ENCODE measurements at regions of chr3 and their contacts with region 1.

Region 1: DNA sequence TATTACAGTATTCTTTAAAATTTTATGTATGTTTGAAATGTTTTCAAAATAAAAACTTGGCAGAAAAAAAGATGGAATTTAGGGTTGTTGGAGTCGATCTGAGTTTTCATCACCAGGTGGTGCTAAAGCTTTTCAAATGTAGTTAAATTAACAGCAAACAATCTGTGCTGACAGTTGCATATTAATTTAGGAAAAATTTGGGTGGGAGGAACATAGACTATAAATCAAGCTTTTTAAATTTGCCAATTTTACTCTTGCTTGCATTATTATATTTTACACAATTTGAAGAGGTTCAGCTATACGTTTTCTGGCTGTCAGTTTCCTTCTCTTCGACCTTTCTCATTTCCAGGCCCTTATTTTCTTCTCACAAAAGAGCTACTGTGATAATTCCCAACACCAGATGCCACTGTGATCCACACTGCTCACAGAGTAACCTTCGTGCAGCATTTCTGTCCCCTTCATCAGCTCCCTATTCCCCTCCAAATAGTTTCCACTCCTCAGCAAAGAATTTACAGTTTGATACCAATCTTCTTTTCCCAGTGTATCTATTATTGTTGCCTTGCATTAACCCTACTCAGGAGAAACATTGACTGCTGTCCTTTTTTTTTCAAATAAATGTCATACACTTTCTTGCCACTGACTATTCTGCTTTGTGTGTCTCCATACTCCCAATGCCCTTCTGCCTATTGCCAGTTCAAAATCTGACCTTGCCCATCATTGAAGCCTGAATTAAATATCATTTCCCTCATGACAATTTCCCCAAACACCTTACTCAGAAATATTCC is 53.4 kb upstream of the EIF5A2 start:
- DNase-seq: no peak
- ATAC-seq: no peak
- H3K4me3 ChIP-seq: no peak overlapping the region
- H3K27ac ChIP-seq: peak overlapping the region in 1 of 12 donors; percentile 30
- H3K4me1 ChIP-seq: peaks cover 0 to 11% (median 0%) of the 10 kb centered on the region in 12 donors
- H3K27me3 ChIP-seq: no peaks in the 10 kb centered on the region
- CTCF ChIP-seq: peak; percentile 33 to 74 (median 62)
- POLR2A ChIP-seq: no peak

Region 2: DNA sequence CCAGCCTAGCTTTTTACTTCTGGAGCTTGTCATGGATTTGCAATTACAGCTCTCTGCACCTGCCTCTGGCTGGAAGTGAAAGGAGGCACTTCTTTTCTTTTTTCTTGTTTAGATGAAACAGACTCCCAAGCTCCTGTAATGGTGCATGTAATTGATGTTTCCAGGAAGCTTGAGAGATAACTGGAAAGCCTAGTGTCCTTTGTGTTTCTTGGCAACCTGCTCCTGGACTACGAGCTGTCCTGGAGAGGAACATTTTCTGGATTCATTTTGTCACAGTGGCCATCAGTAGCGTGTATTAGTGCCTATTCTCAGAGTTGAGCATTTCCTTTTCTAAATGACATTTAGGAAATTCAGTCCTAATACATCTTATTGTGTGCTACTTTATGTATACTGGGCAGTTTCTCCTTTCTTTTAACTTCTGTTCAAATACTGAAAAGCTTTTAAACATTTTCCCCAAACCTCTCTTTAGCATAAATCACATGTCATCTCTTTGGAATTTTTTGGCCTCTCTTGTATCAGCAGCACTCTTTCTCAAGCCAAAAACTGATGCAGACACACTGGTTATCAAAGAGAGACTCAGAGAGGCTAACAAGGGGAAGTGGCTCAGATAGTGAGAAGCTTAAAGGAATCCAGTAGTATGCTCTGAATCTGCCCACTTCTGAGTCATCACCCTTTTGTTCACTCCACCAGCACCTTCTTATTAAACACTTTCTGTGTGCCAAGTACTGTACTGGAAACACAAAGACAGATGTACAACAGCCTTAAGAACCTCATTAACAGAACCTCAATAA is 127.4 kb after region 1 on chr3:
- intact Hi-C with region 1: no loop called
- DNase-seq: no peak
- ATAC-seq: peak; percentile 56 to 83 (median 74)
- H3K4me3 ChIP-seq: no peak overlapping the region
- H3K27ac ChIP-seq: peak overlapping the region in 7 of 12 donors; percentile 8 to 56 (median 41)
- H3K4me1 ChIP-seq: peaks cover 0 to 34% (median 19%) of the 10 kb centered on the region in 12 donors
- H3K27me3 ChIP-seq: no peaks in the 10 kb centered on the region
- CTCF ChIP-seq: no peak
- POLR2A ChIP-seq: no peak

Region 3: GRCh38 chr3:171142985-171143384 is 181.2 kb after region 1 on chr3:
- intact Hi-C with region 1: loop called in 1 of 10 experiments (anchors 10 kb)
- DNase-seq: no peak
- ATAC-seq: peak in 1 of 4 donors; percentile 22
- H3K4me3 ChIP-seq: no peak overlapping the region
- H3K27ac ChIP-seq: no peak overlapping the region
- H3K4me1 ChIP-seq: no peaks in the 10 kb centered on the region
- H3K27me3 ChIP-seq: no peaks in the 10 kb centered on the region
- CTCF ChIP-seq: no peak
- POLR2A ChIP-seq: no peak

Region 4: GRCh38 chr3:171172070-171172469 is 210.3 kb after region 1 on chr3:
- intact Hi-C with region 1: loop called in 1 of 10 experiments (anchors 10 kb)
- DNase-seq: no peak
- ATAC-seq: no peak
- H3K4me3 ChIP-seq: no peak overlapping the region
- H3K27ac ChIP-seq: no peak overlapping the region
- H3K4me1 ChIP-seq: peaks cover 0 to 32% (median 15%) of the 10 kb centered on the region in 12 donors
- H3K27me3 ChIP-seq: no peaks in the 10 kb centered on the region
- CTCF ChIP-seq: peak in 6 of 12 donors; percentile 6 to 26 (median 16)
- POLR2A ChIP-seq: no peak

Region 5: DNA sequence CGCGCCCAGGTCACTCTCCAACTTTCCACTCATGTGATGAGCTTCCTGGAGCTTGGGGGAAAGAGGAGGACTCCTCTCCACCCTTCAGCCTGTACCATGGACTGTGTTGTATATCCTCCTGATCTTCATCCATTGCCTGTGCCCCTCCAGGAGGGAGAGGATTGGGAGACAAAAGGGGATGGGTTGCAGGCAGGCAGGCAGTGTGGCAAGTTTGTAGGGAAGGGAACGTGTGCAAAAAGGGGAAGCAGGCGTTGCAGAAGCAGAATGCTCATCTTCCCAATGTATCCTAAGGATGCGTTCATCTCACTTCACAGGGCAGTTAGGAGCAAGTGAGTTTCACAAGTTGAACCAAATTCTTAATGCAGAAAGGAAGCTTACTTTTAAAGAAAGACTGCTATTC is 1514.5 kb after region 1 on chr3:
- intact Hi-C with region 1: loop called in 1 of 10 experiments (anchors 10 kb)
- DNase-seq: no peak
- ATAC-seq: peak; percentile 17 to 51 (median 30)
- H3K4me3 ChIP-seq: peak overlapping the region in 8 of 12 donors; percentile 17 to 63 (median 52)
- H3K27ac ChIP-seq: peak overlapping the region in 3 of 12 donors; percentile 27 to 67 (median 59)
- H3K4me1 ChIP-seq: peaks cover 0 to 20% (median 0%) of the 10 kb centered on the region in 12 donors
- H3K27me3 ChIP-seq: no peaks in the 10 kb centered on the region
- CTCF ChIP-seq: no peak
- POLR2A ChIP-seq: no peak

Measured in heart left ventricle (tissue), 16 donors.